Activated T-helper 1 cell treated with anti-CD3 and anti-CD28 coated beads, Interleukin-12 subunit alpha, Interleukin-12 subunit beta, Interleukin-2, Interleukin-4 antibody, amounts not matched to agents 30 ng/mL and 10 ng/mL and 1 ng/mL, durations not matched to agents 14 hours and 24 hours and 36 hours (primary cell): ENCODE measurements at regions of chr12 and their contacts with region 1.

Region 1: GRCh38 chr12:75526655-75527511 is 15.5 kb upstream of the KRR1 start:
- DNase-seq: peak; percentile 9
- H3K4me3 Mint-ChIP-seq: no peak overlapping the region
- H3K27ac Mint-ChIP-seq: no peak overlapping the region
- H3K4me1 Mint-ChIP-seq: peaks cover 15% of the 10 kb centered on the region
- H3K27me3 Mint-ChIP-seq: peaks cover 35% of the 10 kb centered on the region

Region 2: DNA sequence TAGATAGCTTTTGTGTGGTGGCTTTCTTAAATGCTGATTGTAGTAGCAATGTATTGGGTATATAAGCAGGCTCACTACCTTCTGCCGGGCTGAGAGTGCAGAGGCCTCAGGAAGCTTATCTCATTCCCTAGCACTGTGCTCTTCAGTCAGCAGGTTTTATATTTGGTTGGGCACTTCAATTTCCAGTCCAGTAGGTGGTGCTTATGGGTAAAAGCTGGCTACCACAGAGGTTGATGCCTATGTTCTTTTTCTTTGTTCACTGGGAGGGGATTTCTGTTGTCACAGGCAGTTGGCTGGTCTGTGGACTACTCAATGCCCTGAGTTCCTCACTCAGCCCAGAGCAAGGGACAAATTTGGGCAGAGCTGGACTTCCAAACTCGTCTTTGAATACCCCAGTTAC is 89.3 kb before region 1 on chr12:
- intact Hi-C with region 1: no loop called
- DNase-seq: no peak
- H3K4me3 Mint-ChIP-seq: no peak overlapping the region
- H3K27ac Mint-ChIP-seq: no peak overlapping the region
- H3K4me1 Mint-ChIP-seq: peaks cover 10% of the 10 kb centered on the region
- H3K27me3 Mint-ChIP-seq: peaks cover 2% of the 10 kb centered on the region

Region 3: DNA sequence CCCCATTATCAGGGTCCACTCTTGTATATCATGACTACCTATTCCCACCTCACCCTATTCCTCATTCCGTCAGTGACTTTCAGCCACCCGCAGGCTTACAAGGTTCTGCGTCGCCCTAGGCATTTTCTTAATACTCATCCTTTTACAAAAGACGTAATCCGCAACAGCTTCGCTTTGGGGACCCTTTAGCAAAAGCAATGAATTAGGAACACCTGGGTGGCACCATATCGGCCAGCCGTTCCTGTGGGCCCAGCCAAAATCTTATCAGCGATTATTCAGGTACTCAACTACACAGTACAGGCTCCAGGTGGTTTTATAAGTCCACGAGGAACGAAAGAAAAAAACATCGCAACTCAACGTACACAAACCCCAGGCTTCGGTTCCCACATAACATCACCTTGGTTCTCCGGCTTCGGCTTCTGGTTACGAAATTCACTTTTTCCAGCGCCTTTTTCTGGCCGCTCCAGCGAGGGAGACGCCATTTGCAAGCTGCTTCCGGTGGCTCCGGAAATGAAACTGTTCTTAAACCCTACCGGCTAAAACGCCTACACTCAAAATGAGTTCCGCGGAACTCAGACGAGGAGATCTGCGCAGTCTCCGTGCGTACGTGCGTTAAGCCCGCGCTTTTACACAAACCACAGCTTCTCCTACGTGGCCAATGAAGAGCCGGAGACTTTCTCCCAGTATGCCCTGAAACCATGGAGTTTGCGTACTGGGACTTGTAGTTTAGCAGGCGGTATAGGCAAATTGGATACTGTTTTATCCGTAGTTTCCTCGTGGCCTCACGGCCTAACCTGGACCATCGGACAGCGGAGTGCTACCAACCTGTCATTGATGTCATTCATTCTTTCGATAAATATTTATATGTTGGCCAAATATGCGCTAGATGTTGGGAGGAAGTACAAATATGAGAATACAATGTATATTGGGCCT is 15.5 kb before region 1 on chr12 and contains the start of gene KRR1:
- intact Hi-C with region 1: no loop called
- DNase-seq: peak; percentile 89
- H3K4me3 Mint-ChIP-seq: peak within 1 kb of the TSS; percentile 97
- H3K27ac Mint-ChIP-seq: peak within 1 kb of the TSS; percentile 98
- H3K4me1 Mint-ChIP-seq: peaks cover 45% of the 10 kb centered on the region
- H3K27me3 Mint-ChIP-seq: peaks cover 3% of the 10 kb centered on the region
- total RNA-seq, gene KRR1: 130 and 137 TPM in 2 replicates

Region 4: GRCh38 chr12:75805905-75806304 is 279.0 kb after region 1 on chr12:
- intact Hi-C with region 1: loop called (anchors 5 kb)
- DNase-seq: no peak
- H3K4me3 Mint-ChIP-seq: no peak overlapping the region
- H3K27ac Mint-ChIP-seq: no peak overlapping the region
- H3K4me1 Mint-ChIP-seq: no peaks in the 10 kb centered on the region
- H3K27me3 Mint-ChIP-seq: peaks cover 5% of the 10 kb centered on the region

Region 5: GRCh38 chr12:75877763-75878621 is 351.1 kb after region 1 on chr12:
- intact Hi-C with region 1: loop called (anchors 10 kb)
- DNase-seq: no peak
- H3K4me3 Mint-ChIP-seq: no peak overlapping the region
- H3K27ac Mint-ChIP-seq: no peak overlapping the region
- H3K4me1 Mint-ChIP-seq: peaks cover 25% of the 10 kb centered on the region
- H3K27me3 Mint-ChIP-seq: peaks cover 32% of the 10 kb centered on the region

Region 6: DNA sequence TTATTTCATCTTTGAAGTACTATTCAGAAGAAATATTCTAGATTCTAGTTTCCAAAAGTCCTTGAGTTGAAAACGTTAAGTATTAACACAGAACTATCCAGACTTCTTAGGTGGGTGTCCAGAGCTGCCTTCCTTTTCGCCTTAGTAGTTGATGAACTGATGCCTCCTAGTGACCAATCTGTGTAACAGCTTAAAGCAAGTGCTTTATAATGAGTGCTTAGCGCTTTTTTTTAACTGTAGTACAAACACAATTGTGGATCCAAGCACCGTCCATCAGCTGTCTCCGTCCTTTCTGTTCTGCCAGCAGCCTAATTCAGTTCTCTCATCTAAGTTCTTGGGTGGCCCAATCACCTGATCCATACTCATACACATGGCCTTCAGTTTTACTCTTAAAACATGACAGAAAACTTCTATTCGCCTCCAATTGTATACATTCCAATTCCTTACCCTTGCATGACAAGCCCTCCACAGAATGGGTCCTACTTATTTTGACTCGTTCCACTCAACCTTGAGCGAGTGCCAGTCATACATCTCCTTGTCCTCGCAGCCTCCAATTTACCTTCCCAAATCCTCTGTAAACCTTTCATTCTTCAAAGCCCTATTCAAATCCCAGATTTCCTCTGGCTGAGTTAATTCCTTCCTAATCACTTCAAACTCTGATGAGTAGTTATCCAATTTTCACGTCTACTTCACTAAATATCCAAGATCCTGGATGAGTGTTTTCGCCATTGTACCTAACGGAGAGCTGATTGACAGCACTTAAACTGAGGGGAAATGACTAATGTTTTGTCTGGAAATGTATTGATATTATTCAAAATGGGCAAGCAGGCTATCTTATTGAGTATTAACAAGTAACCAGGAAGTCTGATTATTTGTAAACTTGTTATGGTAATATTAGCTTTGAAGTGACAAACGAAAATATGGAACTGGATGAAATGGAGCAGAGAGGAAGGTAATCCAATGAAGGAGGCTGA is 510.5 kb after region 1 on chr12:
- intact Hi-C with region 1: loop called (anchors 1 kb)
- DNase-seq: peak; percentile 26
- H3K4me3 Mint-ChIP-seq: no peak overlapping the region
- H3K27ac Mint-ChIP-seq: peak overlapping the region; percentile 0
- H3K4me1 Mint-ChIP-seq: peaks cover 24% of the 10 kb centered on the region
- H3K27me3 Mint-ChIP-seq: no peaks in the 10 kb centered on the region

Region 7: DNA sequence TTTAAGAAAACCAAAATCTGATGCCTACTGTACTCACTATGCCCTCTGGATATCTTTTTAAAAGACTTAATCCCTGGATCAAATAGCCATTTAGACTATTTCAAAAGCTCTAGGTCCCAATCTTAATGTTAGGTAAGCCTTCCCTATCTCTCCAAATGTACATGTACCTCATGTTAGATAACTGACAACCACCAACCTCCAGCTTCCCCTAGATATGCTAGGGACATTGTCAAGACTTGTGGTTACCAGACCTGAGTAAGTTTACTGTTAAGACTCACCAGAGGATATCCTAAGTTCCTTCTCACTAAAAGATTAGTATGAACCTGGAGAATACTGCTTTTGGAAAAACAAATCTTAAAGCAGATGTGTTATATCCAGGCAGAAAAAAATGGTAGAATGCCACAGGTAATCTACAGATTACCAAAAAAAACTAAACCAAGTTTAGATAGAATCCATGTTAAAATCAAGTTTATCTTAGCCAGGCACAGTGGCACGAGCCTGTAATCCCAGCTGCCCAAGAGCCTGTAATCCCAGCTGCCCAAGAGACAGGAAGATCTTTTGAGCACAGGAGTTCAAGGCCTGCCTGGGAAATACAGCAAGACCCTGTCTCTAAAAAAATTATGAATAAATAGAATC is 547.9 kb after region 1 on chr12:
- intact Hi-C with region 1: loop called (anchors 1 kb)
- DNase-seq: no peak
- H3K4me3 Mint-ChIP-seq: no peak overlapping the region
- H3K27ac Mint-ChIP-seq: no peak overlapping the region
- H3K4me1 Mint-ChIP-seq: peaks cover 70% of the 10 kb centered on the region
- H3K27me3 Mint-ChIP-seq: no peaks in the 10 kb centered on the region

Region 8: DNA sequence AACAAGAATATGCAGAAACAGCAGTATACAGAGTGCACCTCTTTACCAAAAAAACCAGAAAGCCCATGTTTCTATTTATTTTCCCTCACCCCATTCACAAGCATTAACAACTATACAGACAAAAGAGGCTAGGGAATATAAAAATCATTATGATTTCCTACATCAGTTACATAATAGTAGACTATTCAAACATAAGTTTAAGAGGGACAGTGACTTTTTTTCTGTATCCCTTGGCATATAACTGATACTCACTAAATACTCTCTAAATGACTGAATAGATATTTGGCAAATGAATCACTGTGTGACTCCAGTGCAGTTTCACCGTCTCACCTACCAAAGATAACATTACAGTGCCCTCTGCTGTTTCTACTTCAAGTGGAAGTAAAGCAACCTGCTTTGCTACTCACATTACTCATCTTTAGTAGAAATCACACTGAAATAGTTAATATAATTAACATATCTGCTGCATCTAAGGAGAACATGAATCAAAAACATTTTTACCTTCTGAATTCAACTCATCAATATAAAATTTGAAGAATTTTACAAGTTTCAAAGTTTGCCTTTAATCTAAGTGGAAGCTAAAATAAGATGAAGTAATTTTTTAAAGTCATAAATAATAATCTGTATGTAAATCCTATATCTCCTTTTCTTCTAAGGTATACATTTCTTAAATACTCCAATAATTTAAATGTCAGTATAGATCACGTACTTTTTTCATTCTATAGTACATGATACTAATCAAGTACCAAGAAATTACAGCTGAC is 928.9 kb after region 1 on chr12:
- intact Hi-C with region 1: loop called (anchors 5 kb)
- DNase-seq: peak; percentile 5
- H3K4me3 Mint-ChIP-seq: no peak overlapping the region
- H3K27ac Mint-ChIP-seq: no peak overlapping the region
- H3K4me1 Mint-ChIP-seq: peaks cover 15% of the 10 kb centered on the region
- H3K27me3 Mint-ChIP-seq: no peaks in the 10 kb centered on the region